ENCODE measurements at regions of chr12 and their contacts with region 1.

Region 1: DNA sequence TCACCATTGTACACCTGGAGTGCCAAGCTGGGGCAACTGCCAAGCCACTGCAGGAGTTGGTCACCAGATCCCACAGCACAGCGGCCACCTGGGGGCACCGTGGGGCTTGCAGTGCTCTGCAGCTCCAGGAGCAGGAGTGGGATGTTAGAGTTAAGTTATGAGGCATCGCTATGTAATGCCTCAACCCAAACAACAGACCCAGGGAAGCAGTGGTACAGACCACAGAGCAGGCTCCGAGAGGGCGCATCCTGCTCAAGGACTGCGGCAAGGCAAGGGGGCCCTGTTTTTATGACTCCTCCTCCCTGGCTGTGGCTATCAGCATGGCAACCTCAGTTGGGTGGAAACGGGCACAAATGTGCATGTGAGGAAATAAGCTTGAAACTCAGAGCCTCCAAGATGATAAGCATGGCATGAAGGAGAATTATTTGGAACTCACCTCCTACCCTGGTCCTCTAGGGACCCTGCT is 63.1 kb downstream of the ARL6IP4 start:
- DNase-seq: peak; percentile 37 to 88 (median 73)
- ATAC-seq: peak; percentile 98
- H3K4me3 ChIP-seq: no peak overlapping the region
- H3K4me3 Mint-ChIP-seq: peak overlapping the region; percentile 37
- H3K27ac ChIP-seq: peak overlapping the region; percentile 43 to 48
- H3K27ac Mint-ChIP-seq: peak overlapping the region; percentile 91
- H3K4me1 ChIP-seq: peaks cover 18% of the 10 kb centered on the region
- H3K4me1 Mint-ChIP-seq: peaks cover 30% of the 10 kb centered on the region
- H3K27me3 ChIP-seq: no peaks in the 10 kb centered on the region
- H3K27me3 Mint-ChIP-seq: no peaks in the 10 kb centered on the region
- CTCF ChIP-seq: peak; percentile 58

Region 2: GRCh38 chr12:121793838-121794533 is 1249.6 kb before region 1 on chr12:
- CTCF ChIA-PET with region 1: no interaction called
- POLR2A ChIA-PET with region 1: no interaction called
- intact Hi-C with region 1: no loop called
- DNase-seq: peak; percentile 93 to 98 (median 95)
- ATAC-seq: peak; percentile 48
- H3K4me3 ChIP-seq: peak overlapping the region; percentile 93
- H3K4me3 Mint-ChIP-seq: peak overlapping the region; percentile 89
- H3K27ac ChIP-seq: peak overlapping the region; percentile 70 to 99
- H3K27ac Mint-ChIP-seq: peak overlapping the region; percentile 98
- H3K4me1 ChIP-seq: peaks cover 60% of the 10 kb centered on the region
- H3K4me1 Mint-ChIP-seq: peaks cover 66% of the 10 kb centered on the region
- H3K27me3 ChIP-seq: no peaks in the 10 kb centered on the region
- H3K27me3 Mint-ChIP-seq: no peaks in the 10 kb centered on the region
- CTCF ChIP-seq: peak; percentile 97

Region 3: DNA sequence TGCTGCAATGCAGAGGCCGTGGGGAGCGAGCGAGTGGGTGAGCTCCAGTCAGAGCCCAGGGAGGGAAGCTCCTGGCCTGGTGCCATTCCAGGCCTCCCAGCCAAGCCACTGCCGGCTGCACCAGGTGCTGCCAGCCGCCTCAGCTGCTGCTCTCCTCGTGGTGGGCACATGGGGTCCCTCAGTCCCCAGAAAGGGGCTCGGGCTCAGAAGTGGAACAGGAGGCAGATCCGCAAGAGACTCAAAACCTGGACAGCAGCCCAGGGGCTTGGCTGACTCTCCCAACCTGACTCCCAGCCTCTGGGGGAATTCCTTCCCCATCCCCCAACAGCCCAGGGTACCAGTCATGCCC is 79.6 kb before region 1 on chr12:
- CTCF ChIA-PET with region 1: no interaction called
- POLR2A ChIA-PET with region 1: no interaction called
- intact Hi-C with region 1: no loop called
- DNase-seq: peak in 1 of 9 experiments; percentile 9
- ATAC-seq: no peak
- H3K4me3 ChIP-seq: no peak overlapping the region
- H3K4me3 Mint-ChIP-seq: no peak overlapping the region
- H3K27ac ChIP-seq: no peak overlapping the region
- H3K27ac Mint-ChIP-seq: no peak overlapping the region
- H3K4me1 ChIP-seq: peaks cover 15% of the 10 kb centered on the region
- H3K4me1 Mint-ChIP-seq: peaks cover 9% of the 10 kb centered on the region
- H3K27me3 ChIP-seq: no peaks in the 10 kb centered on the region
- H3K27me3 Mint-ChIP-seq: no peaks in the 10 kb centered on the region
- CTCF ChIP-seq: no peak

Region 4: GRCh38 chr12:122980183-122981046 is 63.2 kb before region 1 on chr12 and contains the start of gene ARL6IP4:
- CTCF ChIA-PET with region 1: no interaction called
- POLR2A ChIA-PET with region 1: interaction called, 3 read pairs
- intact Hi-C with region 1: loop called in 1 of 2 experiments (anchors 5 kb)
- DNase-seq: peak; percentile 27 to 84 (median 64)
- ATAC-seq: peak; percentile 75
- H3K4me3 ChIP-seq: peak within 1 kb of the TSS; percentile 67 to 82
- H3K4me3 Mint-ChIP-seq: peak within 1 kb of the TSS; percentile 88
- H3K27ac ChIP-seq: peak within 1 kb of the TSS; percentile 67 to 69
- H3K27ac Mint-ChIP-seq: peak within 1 kb of the TSS; percentile 87
- H3K4me1 ChIP-seq: peaks cover 60% of the 10 kb centered on the region
- H3K4me1 Mint-ChIP-seq: peaks cover 61% of the 10 kb centered on the region
- H3K27me3 ChIP-seq: no peaks in the 10 kb centered on the region
- H3K27me3 Mint-ChIP-seq: no peaks in the 10 kb centered on the region
- CTCF ChIP-seq: no peak
- total RNA-seq, gene ARL6IP4: 130 to 131 TPM

Region 5: DNA sequence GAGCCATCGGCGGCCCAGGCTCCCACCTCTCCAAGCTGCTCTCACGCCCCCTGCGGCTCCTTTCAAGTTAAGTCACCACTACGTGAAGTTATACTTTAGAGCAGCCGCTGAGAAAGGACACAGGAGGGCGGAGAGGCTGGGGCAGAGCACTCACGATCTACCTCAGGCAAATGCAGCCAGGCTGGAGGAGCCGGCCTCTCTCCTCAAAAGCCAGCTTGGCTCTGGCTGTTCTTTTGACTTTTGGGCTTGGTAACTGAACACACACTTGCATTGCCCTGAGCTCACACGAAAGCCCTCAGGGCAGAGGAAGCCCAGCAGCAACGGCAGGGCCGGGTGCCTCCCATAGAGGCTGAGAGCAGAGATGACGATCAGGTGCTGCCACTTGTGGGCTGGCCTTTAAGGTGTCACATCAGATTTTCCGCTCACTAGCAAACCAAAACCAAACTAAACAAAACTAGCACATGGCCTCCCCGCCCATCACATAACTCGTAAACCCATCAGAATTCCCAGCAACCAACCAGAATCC is 32.1 kb after region 1 on chr12:
- CTCF ChIA-PET with region 1: interaction called, 38 read pairs
- POLR2A ChIA-PET with region 1: interaction called, 19 read pairs
- intact Hi-C with region 1: loop called (anchors 1 kb)
- DNase-seq: peak; percentile 32 to 87 (median 77)
- ATAC-seq: peak; percentile 81
- H3K4me3 ChIP-seq: peak overlapping the region; percentile 56 to 66
- H3K4me3 Mint-ChIP-seq: peak overlapping the region; percentile 90
- H3K27ac ChIP-seq: peak overlapping the region; percentile 71 to 81
- H3K27ac Mint-ChIP-seq: peak overlapping the region; percentile 95
- H3K4me1 ChIP-seq: peaks cover 49% of the 10 kb centered on the region
- H3K4me1 Mint-ChIP-seq: peaks cover 63% of the 10 kb centered on the region
- H3K27me3 ChIP-seq: no peaks in the 10 kb centered on the region
- H3K27me3 Mint-ChIP-seq: no peaks in the 10 kb centered on the region
- CTCF ChIP-seq: peak; percentile 49

Region 6: DNA sequence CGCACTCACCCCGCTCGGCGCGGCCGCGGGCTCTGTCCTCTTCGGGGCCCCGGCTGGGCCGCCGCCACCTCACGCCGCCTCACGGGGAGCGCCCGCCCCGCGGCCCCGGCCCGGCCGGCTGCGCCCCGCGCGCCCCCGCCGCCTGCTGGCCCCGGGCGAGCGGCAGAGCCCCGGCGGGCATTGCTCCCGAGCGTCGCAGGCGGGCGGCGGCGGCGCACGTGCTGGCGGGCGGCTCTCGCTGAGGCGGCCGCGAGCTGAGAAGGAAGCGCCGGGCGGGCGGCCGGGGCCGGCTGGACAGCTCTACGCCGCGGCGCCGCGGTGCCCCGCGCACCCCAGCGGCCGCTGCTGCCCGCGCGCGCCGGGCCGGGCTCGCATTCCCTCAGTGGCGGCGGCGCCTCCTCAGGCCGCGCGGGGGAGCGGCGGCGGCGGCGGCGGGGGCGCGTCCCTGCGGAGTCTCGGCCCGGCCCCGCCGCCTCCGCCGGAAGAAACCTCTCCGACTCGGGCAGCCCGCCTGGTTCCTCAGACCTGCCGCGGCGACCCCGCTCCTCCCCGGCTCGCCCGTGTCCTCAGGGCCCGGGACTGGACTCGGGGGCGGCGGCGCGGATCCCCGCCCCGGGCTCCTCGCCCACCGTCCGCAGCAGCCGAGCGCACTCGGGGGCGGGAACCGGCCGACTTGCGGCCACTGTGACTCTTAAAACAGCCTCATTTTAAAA is 107.3 kb after region 1 on chr12 and contains the start of gene PITPNM2:
- CTCF ChIA-PET with region 1: interaction called, 57 read pairs
- POLR2A ChIA-PET with region 1: interaction called, 3 read pairs
- intact Hi-C with region 1: loop called (anchors 1 to 2 kb)
- DNase-seq: peak; percentile 14 to 82 (median 61)
- ATAC-seq: peak; percentile 86
- H3K4me3 ChIP-seq: peak within 1 kb of the TSS; percentile 60 to 83
- H3K4me3 Mint-ChIP-seq: peak within 1 kb of the TSS; percentile 84
- H3K27ac ChIP-seq: peak within 1 kb of the TSS in 1 of 2 experiments; percentile 47
- H3K27ac Mint-ChIP-seq: peak within 1 kb of the TSS; percentile 80
- H3K4me1 ChIP-seq: peaks cover 37% of the 10 kb centered on the region
- H3K4me1 Mint-ChIP-seq: peaks cover 43% of the 10 kb centered on the region
- H3K27me3 ChIP-seq: no peaks in the 10 kb centered on the region
- H3K27me3 Mint-ChIP-seq: no peaks in the 10 kb centered on the region
- CTCF ChIP-seq: no peak
- total RNA-seq, gene PITPNM2: 28.1 to 29.2 TPM

Region 7: DNA sequence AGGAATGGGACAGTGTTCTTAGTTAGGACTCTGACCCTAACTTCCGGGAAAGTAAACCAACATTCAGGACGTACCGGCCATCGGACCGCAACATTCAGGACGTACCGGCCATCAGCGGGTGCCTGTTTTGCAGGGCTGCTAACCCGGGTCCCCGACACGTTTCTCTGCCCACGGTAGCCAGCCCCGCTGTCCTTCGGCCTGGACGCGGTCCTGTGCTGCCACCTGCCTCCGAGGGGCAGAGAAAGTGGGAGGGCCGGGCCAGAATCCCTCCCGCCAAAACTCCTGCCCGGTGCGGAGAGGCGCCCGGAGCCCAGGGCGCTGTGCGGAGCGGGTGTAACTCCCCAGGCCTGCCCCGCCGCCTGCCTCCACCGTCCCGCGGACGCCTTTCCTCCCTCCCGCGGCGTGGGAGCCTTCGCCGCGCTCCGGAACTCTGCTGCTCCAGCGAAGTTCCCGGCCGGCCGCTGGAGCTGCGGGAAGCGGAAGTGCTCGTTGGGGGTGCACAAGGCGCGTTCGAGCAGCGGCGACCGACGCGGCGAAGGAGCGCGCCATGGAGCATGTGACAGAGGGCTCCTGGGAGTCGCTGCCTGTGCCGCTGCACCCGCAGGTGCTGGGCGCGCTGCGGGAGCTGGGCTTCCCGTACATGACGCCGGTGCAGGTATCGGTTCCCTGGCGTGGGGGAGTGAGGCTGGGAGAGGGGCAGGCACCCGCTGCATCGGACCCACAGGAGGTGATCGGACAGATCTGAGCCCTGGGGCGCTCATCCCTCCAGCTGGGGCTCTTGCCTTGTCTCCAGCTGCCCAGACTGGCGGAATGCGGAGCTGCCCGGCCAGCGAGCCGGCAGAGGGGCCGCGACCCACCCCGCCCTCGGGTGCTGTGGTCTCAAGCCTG is 558.3 kb after region 1 on chr12 and contains the start of gene DDX55:
- CTCF ChIA-PET with region 1: no interaction called
- POLR2A ChIA-PET with region 1: no interaction called
- intact Hi-C with region 1: loop called in 1 of 2 experiments (anchors 5 kb)
- DNase-seq: peak; percentile 71 to 94 (median 87)
- ATAC-seq: peak; percentile 93
- H3K4me3 ChIP-seq: peak within 1 kb of the TSS; percentile 92 to 94
- H3K4me3 Mint-ChIP-seq: peak within 1 kb of the TSS; percentile 98
- H3K27ac ChIP-seq: peak within 1 kb of the TSS; percentile 78 to 89
- H3K27ac Mint-ChIP-seq: peak within 1 kb of the TSS; percentile 94
- H3K4me1 ChIP-seq: peaks cover 16% of the 10 kb centered on the region
- H3K4me1 Mint-ChIP-seq: peaks cover 31% of the 10 kb centered on the region
- H3K27me3 ChIP-seq: no peaks in the 10 kb centered on the region
- H3K27me3 Mint-ChIP-seq: no peaks in the 10 kb centered on the region
- CTCF ChIP-seq: peak; percentile 42
- total RNA-seq, gene DDX55: 41.1 to 44.5 TPM

Measured in CD8-positive, alpha-beta T cell (primary cell).